Caco-2 (cell line): ENCODE measurements at regions of chr2 and their contacts with region 1.

Region 1: GRCh38 chr2:38602732-38603401 is at the start of gene HNRNPLL:
- DNase-seq: peak; percentile 99 to 100
- H3K4me3 ChIP-seq: peak within 1 kb of the TSS; percentile 87
- H3K4me3 Mint-ChIP-seq: peak within 1 kb of the TSS; percentile 92
- H3K27ac Mint-ChIP-seq: peak within 1 kb of the TSS; percentile 96
- H3K4me1 ChIP-seq: 0 out of 2 replicates have a peak, but pooled peaks cover 5% of the 10 kb centered on the region
- H3K4me1 Mint-ChIP-seq: peaks cover 6% of the 10 kb centered on the region
- H3K27me3 ChIP-seq: no peaks in the 10 kb centered on the region
- H3K27me3 Mint-ChIP-seq: no peaks in the 10 kb centered on the region
- CTCF ChIP-seq: peak in 1 of 2 experiments; percentile 12
- total RNA-seq, gene HNRNPLL: 58.0 and 59.4 TPM in 2 replicates

Region 2: GRCh38 chr2:38535744-38536506 is 66.9 kb before region 1 on chr2:
- CTCF ChIA-PET with region 1: no interaction called
- POLR2A ChIA-PET with region 1: no interaction called
- intact Hi-C with region 1: no loop called
- DNase-seq: peak; percentile 79 to 91
- H3K4me3 ChIP-seq: peak overlapping the region; percentile 38
- H3K4me3 Mint-ChIP-seq: peak overlapping the region; percentile 53
- H3K27ac Mint-ChIP-seq: no peak overlapping the region
- H3K4me1 ChIP-seq: peaks cover 5% of the 10 kb centered on the region; the same call in 1 of the 2 replicates
- H3K4me1 Mint-ChIP-seq: peaks cover 6% of the 10 kb centered on the region
- H3K27me3 ChIP-seq: no peaks in the 10 kb centered on the region
- H3K27me3 Mint-ChIP-seq: no peaks in the 10 kb centered on the region
- CTCF ChIP-seq: peak; percentile 90 to 92

Region 3: GRCh38 chr2:38581193-38582147 is 21.4 kb before region 1 on chr2:
- CTCF ChIA-PET with region 1: interaction called, 21 read pairs
- POLR2A ChIA-PET with region 1: no interaction called
- intact Hi-C with region 1: no loop called
- DNase-seq: peak in 1 of 2 experiments; percentile 69
- H3K4me3 ChIP-seq: no peak overlapping the region
- H3K4me3 Mint-ChIP-seq: no peak overlapping the region
- H3K27ac Mint-ChIP-seq: no peak overlapping the region
- H3K4me1 ChIP-seq: peaks cover 4% of the 10 kb centered on the region; the same call in 1 of the 2 replicates
- H3K4me1 Mint-ChIP-seq: peaks cover 9% of the 10 kb centered on the region
- H3K27me3 ChIP-seq: no peaks in the 10 kb centered on the region
- H3K27me3 Mint-ChIP-seq: no peaks in the 10 kb centered on the region
- CTCF ChIP-seq: peak; percentile 50 to 82

Region 4: DNA sequence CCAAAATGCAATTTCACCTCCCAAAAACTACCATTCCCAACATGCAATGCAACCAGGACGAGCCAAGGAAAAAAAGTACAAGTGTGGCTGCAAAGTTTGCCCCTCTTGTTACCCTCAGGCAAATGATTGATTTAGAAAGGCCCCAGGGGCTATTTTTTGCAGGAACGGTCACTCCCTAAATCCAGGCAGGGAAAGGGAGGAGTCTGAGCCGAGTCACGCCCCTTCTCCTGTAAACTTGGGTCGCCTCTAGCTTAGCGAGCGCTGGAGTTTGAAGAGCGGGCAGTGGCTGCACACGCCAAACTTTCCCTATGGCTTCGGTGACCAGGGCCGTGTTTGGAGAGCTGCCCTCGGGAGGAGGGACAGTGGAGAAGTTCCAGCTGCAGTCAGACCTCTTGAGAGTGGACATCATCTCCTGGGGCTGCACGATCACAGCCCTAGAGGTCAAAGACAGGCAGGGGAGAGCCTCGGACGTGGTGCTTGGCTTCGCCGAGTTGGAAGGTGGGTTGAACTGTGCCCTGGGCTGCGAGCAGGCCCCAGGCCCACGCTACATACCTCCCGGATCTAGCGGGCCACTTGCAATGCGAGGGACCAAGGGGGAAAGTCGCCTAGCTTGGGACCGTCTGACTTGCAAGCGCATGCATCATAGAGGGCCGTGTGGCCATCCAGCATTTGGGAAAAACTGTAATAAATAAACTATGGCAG is 63.1 kb after region 1 on chr2 and contains the start of gene GALM:
- CTCF ChIA-PET with region 1: interaction called, 5 read pairs
- POLR2A ChIA-PET with region 1: interaction called, 23 read pairs
- intact Hi-C with region 1: loop called (anchors 1 kb)
- DNase-seq: peak; percentile 95
- H3K4me3 ChIP-seq: peak within 1 kb of the TSS; percentile 67
- H3K4me3 Mint-ChIP-seq: peak within 1 kb of the TSS; percentile 95
- H3K27ac Mint-ChIP-seq: peak within 1 kb of the TSS; percentile 71
- H3K4me1 ChIP-seq: peaks cover 20% of the 10 kb centered on the region
- H3K4me1 Mint-ChIP-seq: peaks cover 36% of the 10 kb centered on the region
- H3K27me3 ChIP-seq: no peaks in the 10 kb centered on the region
- H3K27me3 Mint-ChIP-seq: no peaks in the 10 kb centered on the region
- CTCF ChIP-seq: no peak
- total RNA-seq, gene GALM: 48.5 and 48.7 TPM in 2 replicates

Region 5: DNA sequence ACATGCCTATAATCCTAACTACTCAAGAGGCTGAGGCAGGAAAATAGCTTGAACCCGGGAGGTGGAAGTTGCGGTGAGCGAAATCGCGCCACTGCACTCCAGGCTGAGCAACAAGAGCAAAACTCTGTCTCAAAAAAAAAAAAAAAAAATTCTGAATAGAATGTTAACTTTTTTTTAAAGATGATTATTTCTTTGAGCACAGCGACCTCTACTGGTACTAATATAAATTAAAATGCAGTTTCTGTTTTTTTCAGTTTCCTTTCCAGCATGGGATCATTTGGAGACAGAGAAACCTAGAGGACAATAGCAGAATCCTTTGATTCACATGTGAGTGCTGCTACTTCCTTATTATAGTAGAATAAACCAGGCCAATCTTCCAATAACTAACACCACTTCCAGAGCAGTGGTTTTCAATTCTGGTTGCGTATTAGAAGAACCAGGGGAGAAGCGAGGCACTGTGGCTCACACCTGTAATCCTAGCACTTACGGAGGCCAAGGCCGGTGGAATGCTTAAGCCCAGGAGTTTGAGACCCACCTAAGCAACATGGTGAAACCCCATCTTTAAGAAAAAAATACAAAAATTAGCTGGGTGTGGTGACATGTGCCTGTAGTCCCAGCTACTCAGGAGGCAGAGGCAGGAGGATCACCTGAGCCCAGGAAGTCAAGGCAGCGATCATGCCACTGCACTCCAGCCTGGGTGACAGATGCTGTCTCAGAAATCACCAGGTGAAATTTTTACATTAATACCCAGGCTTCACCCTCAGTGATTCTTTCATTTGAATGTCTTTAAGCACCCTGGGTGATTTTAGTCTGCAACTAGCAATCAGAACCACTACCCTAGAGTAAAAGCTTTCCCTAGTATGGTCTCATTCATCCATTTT is 138.2 kb after region 1 on chr2:
- CTCF ChIA-PET with region 1: interaction called, 3 read pairs
- POLR2A ChIA-PET with region 1: no interaction called
- intact Hi-C with region 1: loop called (anchors 5 kb)
- DNase-seq: peak in 1 of 2 experiments; percentile 49
- H3K4me3 ChIP-seq: no peak overlapping the region
- H3K4me3 Mint-ChIP-seq: no peak overlapping the region
- H3K27ac Mint-ChIP-seq: no peak overlapping the region
- H3K4me1 ChIP-seq: peaks cover 5% of the 10 kb centered on the region
- H3K4me1 Mint-ChIP-seq: peaks cover 3% of the 10 kb centered on the region
- H3K27me3 ChIP-seq: no peaks in the 10 kb centered on the region
- H3K27me3 Mint-ChIP-seq: no peaks in the 10 kb centered on the region
- CTCF ChIP-seq: peak; percentile 33 to 56